Dendritic cell treated with granulocyte-macrophage colony-stimulating factor and Interleukin-4, amounts not matched to agents 40 ng/mL and 50 ng/mL, for 4 days (primary cell): ENCODE measurements at regions of chr16 and their contacts with region 1.

Region 1: DNA sequence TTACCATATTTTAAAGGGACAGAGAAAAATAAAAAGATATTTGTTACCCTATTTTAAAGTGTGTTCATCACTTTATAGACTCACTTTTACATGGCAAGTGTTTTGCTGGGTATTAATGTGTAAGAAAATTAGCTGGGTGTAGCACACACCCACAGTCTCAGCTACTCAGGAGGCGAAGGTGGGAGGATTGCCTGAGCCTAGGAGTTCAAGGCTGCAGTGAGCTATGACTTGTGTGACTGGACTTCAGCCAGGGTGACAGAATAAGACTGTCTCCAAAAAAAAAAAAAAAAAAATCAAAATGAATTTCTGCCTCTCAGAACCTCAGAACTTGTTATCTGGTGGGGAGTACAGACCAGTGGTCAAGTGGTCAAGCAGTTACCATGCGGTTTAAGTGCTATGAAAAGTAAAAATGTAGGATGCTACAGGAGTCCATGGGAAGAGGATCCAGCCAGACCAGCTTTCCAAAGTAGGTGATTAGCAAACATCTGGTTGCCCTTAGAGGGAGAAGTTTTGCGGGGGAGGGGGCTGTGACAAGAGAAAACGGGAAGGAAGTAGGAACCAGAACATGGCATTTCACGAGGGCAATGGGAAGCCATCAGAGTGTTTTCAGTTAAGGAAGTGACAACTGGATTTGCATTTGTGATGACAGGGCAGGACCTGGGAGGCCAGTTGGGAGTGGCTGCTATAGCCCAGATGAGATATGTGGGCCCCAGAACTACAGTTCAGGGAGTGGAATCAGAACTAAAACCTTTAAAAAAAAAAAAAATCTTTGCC is 13.9 kb downstream of the CNEP1R1 start:
- H3K4me3 Mint-ChIP-seq: peak overlapping the region; percentile 27
- H3K27ac Mint-ChIP-seq: peak overlapping the region; percentile 83
- H3K4me1 Mint-ChIP-seq: peaks cover 40% of the 10 kb centered on the region
- H3K27me3 Mint-ChIP-seq: no peaks in the 10 kb centered on the region

Region 2: GRCh38 chr16:50152807-50153452 is 114.0 kb after region 1 on chr16 and contains the start of gene TENT4B:
- intact Hi-C with region 1: loop called (anchors 2 kb)
- H3K4me3 Mint-ChIP-seq: peak within 1 kb of the TSS; percentile 93
- H3K27ac Mint-ChIP-seq: peak within 1 kb of the TSS; percentile 91
- H3K4me1 Mint-ChIP-seq: peaks cover 33% of the 10 kb centered on the region
- H3K27me3 Mint-ChIP-seq: no peaks in the 10 kb centered on the region

Region 3: GRCh38 chr16:50273681-50274325 is 234.9 kb after region 1 on chr16:
- intact Hi-C with region 1: no loop called
- H3K4me3 Mint-ChIP-seq: peak overlapping the region; percentile 96
- H3K27ac Mint-ChIP-seq: peak overlapping the region; percentile 90
- H3K4me1 Mint-ChIP-seq: peaks cover 92% of the 10 kb centered on the region
- H3K27me3 Mint-ChIP-seq: no peaks in the 10 kb centered on the region